ENCODE measurements at regions of chrX and their contacts with region 1.

Region 1: DNA sequence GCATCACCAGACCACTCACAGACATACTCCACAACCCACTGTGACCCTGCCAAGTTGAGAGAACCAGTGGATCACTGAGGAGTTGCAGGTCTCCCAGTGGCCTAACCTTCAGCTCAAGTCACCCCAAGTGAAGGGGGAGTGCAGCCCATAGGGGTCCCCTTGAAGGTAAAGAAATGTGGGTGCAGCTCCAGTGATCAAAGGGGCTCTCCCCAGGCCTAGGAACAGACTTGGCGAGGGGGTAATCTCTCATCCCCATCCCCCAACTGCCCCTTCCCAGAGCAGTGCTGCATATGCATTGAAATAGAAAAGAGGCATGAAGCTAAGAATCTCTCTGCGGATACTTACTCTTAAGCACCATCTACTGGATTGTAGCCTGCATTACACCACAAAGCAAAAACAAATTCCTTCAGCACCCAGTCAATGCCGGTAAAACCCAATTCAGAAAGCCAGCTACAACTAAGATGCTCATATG is 27.0 kb downstream of the MAGEE1 start:
- DNase-seq: peak; percentile 6
- H3K4me3 ChIP-seq: no peak overlapping the region
- H3K27ac ChIP-seq: no peak overlapping the region
- H3K4me1 ChIP-seq: no peaks in the 10 kb centered on the region
- H3K27me3 ChIP-seq: no peaks in the 10 kb centered on the region
- CTCF ChIP-seq: peak; percentile 67
- EP300 ChIP-seq: no peak
- RAD21 ChIP-seq: peak; percentile 73

Region 2: GRCh38 chrX:75303795-75304194 is 1150.7 kb before region 1 on chrX:
- CTCF ChIA-PET with region 1: no interaction called
- POLR2A ChIA-PET with region 1: no interaction called
- DNase-seq: no peak
- H3K4me3 ChIP-seq: no peak overlapping the region
- H3K27ac ChIP-seq: no peak overlapping the region
- H3K4me1 ChIP-seq: no peaks in the 10 kb centered on the region
- H3K27me3 ChIP-seq: no peaks in the 10 kb centered on the region
- CTCF ChIP-seq: no peak
- EP300 ChIP-seq: no peak
- RAD21 ChIP-seq: no peak

Region 3: DNA sequence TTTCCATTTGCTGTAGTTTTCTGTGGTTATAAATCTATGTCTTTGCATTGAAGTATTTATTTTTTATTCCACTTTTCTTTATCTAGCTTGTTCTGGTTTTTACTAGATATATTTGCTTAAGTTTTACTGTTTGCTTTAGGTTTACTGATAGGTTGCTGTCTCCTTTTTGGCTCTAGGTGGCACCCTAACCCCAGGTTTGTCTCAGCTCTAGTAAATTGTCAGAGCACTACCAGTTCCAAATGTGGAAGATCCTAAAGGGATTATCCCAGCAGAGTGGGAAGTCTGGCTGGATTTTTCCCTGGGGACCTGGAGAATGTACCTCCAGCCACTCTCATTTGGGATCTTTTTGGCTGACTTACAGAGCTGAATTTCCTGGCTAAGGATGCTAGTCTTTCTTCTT is 175.5 kb before region 1 on chrX:
- CTCF ChIA-PET with region 1: interaction called, 34 read pairs
- POLR2A ChIA-PET with region 1: interaction called, 3 read pairs
- DNase-seq: peak; percentile 47
- H3K4me3 ChIP-seq: 0 out of 4 replicates have a peak overlapping the region, but pooled peaks of 1 of the 2 experiments have one; percentile 0
- H3K27ac ChIP-seq: no peak overlapping the region
- H3K4me1 ChIP-seq: no peaks in the 10 kb centered on the region
- H3K27me3 ChIP-seq: no peaks in the 10 kb centered on the region
- CTCF ChIP-seq: peak; percentile 81
- EP300 ChIP-seq: no peak
- RAD21 ChIP-seq: peak; percentile 87